Naive thymus-derived CD8-positive, alpha-beta T cell (primary cell): ENCODE measurements at regions of chr5 and their contacts with region 1.

Region 1: DNA sequence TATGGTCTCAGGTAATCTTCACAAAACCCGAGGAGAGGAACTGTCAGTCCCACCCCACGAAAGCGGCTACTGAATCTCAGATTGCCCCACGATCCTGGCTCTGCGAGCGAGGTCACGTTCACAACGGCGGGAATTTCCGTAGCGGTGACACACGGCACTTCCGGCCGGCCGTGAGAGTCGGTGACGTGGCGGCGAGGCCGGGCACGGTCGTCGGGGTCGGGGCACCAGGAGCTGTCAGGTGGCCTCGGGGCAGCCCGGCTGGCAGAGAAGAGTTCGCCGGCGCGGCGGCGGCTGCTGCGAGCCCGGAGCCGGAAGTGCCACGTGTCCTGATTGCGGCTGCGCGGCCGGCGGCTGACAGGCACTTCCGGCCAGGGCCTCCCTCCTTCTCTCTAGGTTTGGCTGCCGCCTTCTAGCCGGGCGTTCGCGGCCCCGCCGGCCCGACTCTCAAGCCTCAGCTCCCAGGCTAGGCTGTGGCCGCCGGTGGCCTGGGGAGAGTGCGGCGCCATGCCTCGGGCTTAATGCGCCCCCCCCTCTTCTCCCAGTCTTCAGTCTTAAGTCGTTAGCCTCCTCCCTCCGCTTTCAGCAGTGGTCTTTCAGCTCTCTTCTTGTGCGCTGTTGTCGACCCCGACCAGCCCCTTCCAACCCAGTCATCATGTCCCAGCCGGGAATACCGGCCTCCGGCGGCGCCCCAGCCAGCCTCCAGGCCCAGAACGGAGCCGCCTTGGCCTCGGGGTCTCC is at the start of gene SEC24A:
- DNase-seq: peak; percentile 80 to 91 (median 86)
- ATAC-seq: peak; percentile 87 to 91
- H3K4me3 Mint-ChIP-seq: peak within 1 kb of the TSS; percentile 88 to 99 (median 96)
- H3K27ac Mint-ChIP-seq: peak within 1 kb of the TSS; percentile 90 to 99 (median 98)
- H3K4me1 Mint-ChIP-seq: peaks cover 8 to 39% (median 30%) of the 10 kb centered on the region in 4 donors
- H3K27me3 Mint-ChIP-seq: no peaks in the 10 kb centered on the region
- polyA plus RNA-seq, gene SEC24A: 4.0 to 7.7 (median 7.1) TPM

Region 2: DNA sequence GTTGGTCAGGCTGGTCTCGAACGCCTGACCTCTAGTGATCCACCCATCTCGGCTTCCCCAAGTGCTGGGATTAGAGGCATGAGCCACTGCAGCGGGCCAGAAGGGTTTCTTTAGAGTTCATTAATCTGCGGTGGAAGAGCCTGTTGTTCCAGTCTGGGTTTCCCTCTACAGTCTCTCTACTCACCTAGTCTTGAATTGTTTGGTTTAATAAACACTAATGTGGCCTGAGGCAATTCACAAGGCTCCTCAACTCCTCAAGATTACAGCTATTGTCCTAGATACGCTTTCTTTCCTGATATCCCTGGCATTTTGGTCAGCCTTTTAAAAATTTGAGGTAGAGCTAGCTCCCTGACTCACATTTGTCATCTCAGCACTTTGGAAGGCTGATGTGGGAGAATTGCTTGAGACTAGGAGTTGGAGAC is 11.4 kb before region 1 on chr5:
- POLR2A ChIA-PET with region 1: interaction called, 46 read pairs
- DNase-seq: no peak
- ATAC-seq: no peak
- H3K4me3 Mint-ChIP-seq: no peak overlapping the region
- H3K27ac Mint-ChIP-seq: no peak overlapping the region
- H3K4me1 Mint-ChIP-seq: peaks cover 0 to 7% (median 4%) of the 10 kb centered on the region in 4 donors
- H3K27me3 Mint-ChIP-seq: no peaks in the 10 kb centered on the region

Region 3: GRCh38 chr5:134659456-134659855 is 10.9 kb after region 1 on chr5:
- POLR2A ChIA-PET with region 1: no interaction called
- DNase-seq: peak in 2 of 10 donors; percentile 2 to 5
- ATAC-seq: peak in 1 of 2 donors; percentile 70
- H3K4me3 Mint-ChIP-seq: no peak overlapping the region
- H3K27ac Mint-ChIP-seq: peak overlapping the region in 1 of 10 donors; percentile 58
- H3K4me1 Mint-ChIP-seq: peaks cover 13 to 46% (median 20%) of the 10 kb centered on the region in 4 donors
- H3K27me3 Mint-ChIP-seq: no peaks in the 10 kb centered on the region